GM12878 (cell line): ENCODE measurements at regions of chr6 and their contacts with region 1.

Region 1: GRCh38 chr6:12354499-12354898 is 64.3 kb downstream of the EDN1 start:
- DNase-seq: peak; percentile 91
- ATAC-seq: peak; percentile 77
- H3K4me3 ChIP-seq: no peak overlapping the region
- H3K27ac ChIP-seq: peak overlapping the region; percentile 56
- H3K4me1 ChIP-seq: peaks cover 47% of the 10 kb centered on the region
- H3K27me3 ChIP-seq: no peaks in the 10 kb centered on the region
- CTCF ChIP-seq: no peak
- EP300 ChIP-seq: peak; percentile 43 to 56; a peak in 2 of 4 replicates
- POLR2A ChIP-seq: no peak
- RAD21 ChIP-seq: no peak

Region 2: DNA sequence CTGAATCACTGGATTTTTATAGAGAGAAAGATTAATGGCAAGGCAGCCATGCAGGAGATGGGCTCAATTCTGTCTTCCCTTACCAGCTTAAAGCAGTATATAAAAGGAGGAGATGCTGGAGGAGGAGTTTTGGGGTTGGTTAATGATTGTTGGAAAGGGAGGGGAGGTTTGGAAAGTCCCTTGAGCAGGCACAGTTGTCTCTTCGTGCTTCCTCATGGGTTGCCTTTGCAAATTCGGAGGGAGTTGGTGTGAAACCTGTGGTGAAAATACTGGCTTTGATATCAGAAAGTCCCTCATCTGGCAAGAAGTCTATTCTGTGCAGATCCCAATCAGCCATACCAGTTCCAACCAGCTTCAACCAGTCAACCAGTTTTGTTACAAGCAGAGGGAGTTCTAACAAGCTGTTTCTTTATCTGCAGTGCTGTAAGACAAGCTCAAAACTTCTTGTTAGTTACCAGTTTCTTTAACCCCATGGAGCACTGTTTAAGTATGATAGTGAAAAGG is 235.4 kb before region 1 on chr6:
- CTCF ChIA-PET with region 1: no interaction called
- POLR2A ChIA-PET with region 1: no interaction called
- RAD21 ChIA-PET with region 1: interaction called, 3 read pairs
- SMC1A ChIA-PET with region 1: interaction called, 4 read pairs
- in situ Hi-C with region 1: no loop called
- intact Hi-C with region 1: loop called (anchors 10 kb)
- DNase-seq: peak; percentile 97
- ATAC-seq: peak; percentile 83
- H3K4me3 ChIP-seq: peak overlapping the region; percentile 34; the same call in 1 of the 2 replicates
- H3K27ac ChIP-seq: peak overlapping the region; percentile 92
- H3K4me1 ChIP-seq: peaks cover 34% of the 10 kb centered on the region
- H3K27me3 ChIP-seq: no peaks in the 10 kb centered on the region
- CTCF ChIP-seq: no peak
- EP300 ChIP-seq: peak; percentile 82 to 90; a peak in 3 of 4 replicates
- POLR2A ChIP-seq: no peak
- RAD21 ChIP-seq: no peak

Region 3: DNA sequence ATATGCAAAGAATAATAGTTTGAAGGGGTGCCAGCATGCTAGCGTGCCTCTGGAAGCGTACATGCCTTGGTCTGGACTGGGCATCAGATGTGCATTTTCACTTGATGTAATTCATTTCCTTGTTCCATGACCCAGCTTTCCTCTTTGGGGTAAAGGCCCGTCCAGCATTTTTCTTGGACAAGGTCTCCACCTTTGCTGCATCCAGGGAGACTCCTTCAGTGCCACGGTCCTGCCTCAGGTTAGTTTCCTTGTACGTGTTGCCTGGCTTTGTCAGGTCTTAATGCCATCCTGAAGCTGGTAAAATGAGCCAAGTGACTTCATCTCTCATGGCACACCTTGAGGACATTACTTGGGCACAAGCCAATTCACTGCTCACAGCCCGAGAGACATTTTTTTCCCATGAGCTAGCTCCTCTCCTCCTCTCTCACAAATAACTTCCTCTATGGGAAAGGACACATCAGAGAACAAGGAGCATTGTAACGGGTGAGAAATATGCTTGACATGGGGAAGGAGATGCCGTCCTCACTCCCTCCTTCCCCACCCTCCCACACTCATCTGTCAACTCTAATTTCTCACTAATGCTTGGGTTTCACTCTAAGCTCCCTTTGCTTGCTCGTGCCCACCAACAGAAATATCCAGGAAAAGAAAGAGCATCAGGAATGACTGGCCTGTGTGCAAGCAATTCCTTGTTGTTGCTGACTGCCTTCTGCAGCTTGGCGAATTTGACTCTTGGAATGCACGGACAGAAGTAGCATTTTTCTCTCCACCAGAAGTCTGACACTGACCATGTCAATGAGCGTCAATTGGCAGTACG is 40.3 kb before region 1 on chr6:
- CTCF ChIA-PET with region 1: interaction called, 7 read pairs
- POLR2A ChIA-PET with region 1: no interaction called
- RAD21 ChIA-PET with region 1: interaction called, 13 read pairs
- SMC1A ChIA-PET with region 1: interaction called, 5 read pairs
- in situ Hi-C with region 1: no loop called
- intact Hi-C with region 1: no loop called
- DNase-seq: no peak
- ATAC-seq: no peak
- H3K4me3 ChIP-seq: no peak overlapping the region
- H3K27ac ChIP-seq: no peak overlapping the region
- H3K4me1 ChIP-seq: no peaks in the 10 kb centered on the region
- H3K27me3 ChIP-seq: no peaks in the 10 kb centered on the region
- CTCF ChIP-seq: no peak
- EP300 ChIP-seq: no peak
- POLR2A ChIP-seq: no peak
- RAD21 ChIP-seq: no peak

Region 4: GRCh38 chr6:12369781-12370262 is 15.3 kb after region 1 on chr6:
- CTCF ChIA-PET with region 1: interaction called, 78 read pairs
- POLR2A ChIA-PET with region 1: interaction called, 38 read pairs
- RAD21 ChIA-PET with region 1: interaction called, 163 read pairs
- SMC1A ChIA-PET with region 1: interaction called, 160 read pairs
- in situ Hi-C with region 1: no loop called
- intact Hi-C with region 1: no loop called
- DNase-seq: peak; percentile 73
- ATAC-seq: peak; percentile 92
- H3K4me3 ChIP-seq: no peak overlapping the region
- H3K27ac ChIP-seq: peak overlapping the region; percentile 35
- H3K4me1 ChIP-seq: peaks cover 13% of the 10 kb centered on the region
- H3K27me3 ChIP-seq: no peaks in the 10 kb centered on the region
- CTCF ChIP-seq: peak; percentile 25 to 41 (median 30); a peak in 4 of 6 replicates
- EP300 ChIP-seq: peak; percentile 55 to 78; a peak in 2 of 4 replicates
- POLR2A ChIP-seq: no peak
- RAD21 ChIP-seq: peak; percentile 62

Region 5: DNA sequence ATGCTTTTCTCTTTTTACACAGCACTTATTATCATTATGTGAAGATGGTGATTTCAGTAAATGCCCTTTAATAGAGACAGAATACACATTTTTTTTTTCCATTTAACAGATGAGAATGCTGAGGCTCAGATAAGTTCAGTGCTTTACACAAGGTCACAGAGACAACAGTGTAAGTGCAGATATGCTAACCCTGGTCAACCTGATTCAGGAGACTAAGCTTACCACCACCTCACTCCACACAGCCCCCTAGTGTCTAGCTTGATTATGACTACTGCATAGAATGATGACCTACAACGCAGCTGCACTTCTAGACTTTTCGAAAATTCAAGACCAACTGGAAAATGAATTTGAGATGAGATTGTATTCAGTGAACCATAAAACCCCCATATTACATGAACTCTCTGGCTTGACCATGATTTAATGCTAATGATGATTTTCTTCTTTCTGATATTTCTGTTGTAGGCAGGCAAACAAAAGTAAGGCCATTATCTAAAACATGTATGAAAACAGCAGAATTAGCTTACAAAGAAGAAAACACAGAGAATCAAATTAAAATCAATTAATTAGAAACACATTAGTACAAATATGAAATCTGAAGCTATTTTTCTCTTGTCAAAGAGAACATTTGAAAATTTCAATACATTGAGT is 149.9 kb after region 1 on chr6:
- CTCF ChIA-PET with region 1: interaction called, 16 read pairs
- POLR2A ChIA-PET with region 1: no interaction called
- RAD21 ChIA-PET with region 1: interaction called, 15 read pairs
- SMC1A ChIA-PET with region 1: interaction called, 18 read pairs
- in situ Hi-C with region 1: no loop called
- intact Hi-C with region 1: loop called (anchors 5 kb)
- DNase-seq: peak; percentile 32
- ATAC-seq: peak; percentile 99
- H3K4me3 ChIP-seq: no peak overlapping the region
- H3K27ac ChIP-seq: no peak overlapping the region
- H3K4me1 ChIP-seq: no peaks in the 10 kb centered on the region
- H3K27me3 ChIP-seq: no peaks in the 10 kb centered on the region
- CTCF ChIP-seq: peak; percentile 58 to 76 (median 68)
- EP300 ChIP-seq: no peak
- POLR2A ChIP-seq: no peak
- RAD21 ChIP-seq: peak; percentile 65

Region 6: GRCh38 chr6:12826584-12826983 is 472.1 kb after region 1 on chr6:
- CTCF ChIA-PET with region 1: no interaction called
- POLR2A ChIA-PET with region 1: no interaction called
- RAD21 ChIA-PET with region 1: no interaction called
- SMC1A ChIA-PET with region 1: no interaction called
- in situ Hi-C with region 1: no loop called
- intact Hi-C with region 1: no loop called
- DNase-seq: no peak
- ATAC-seq: no peak
- H3K4me3 ChIP-seq: no peak overlapping the region
- H3K27ac ChIP-seq: no peak overlapping the region
- H3K4me1 ChIP-seq: no peaks in the 10 kb centered on the region
- H3K27me3 ChIP-seq: no peaks in the 10 kb centered on the region
- CTCF ChIP-seq: no peak
- EP300 ChIP-seq: no peak
- POLR2A ChIP-seq: no peak
- RAD21 ChIP-seq: no peak